SK-N-SH (cell line): ENCODE measurements at regions of chr21 and their contacts with region 1.

Region 1: GRCh38 chr21:34073032-34073869 is at the starts of genes MRPS6 and SLC5A3:
- DNase-seq: peak; percentile 94
- H3K4me3 ChIP-seq: peak within 1 kb of the TSS; percentile 75 to 89
- H3K27ac ChIP-seq: peak within 1 kb of the TSS; percentile 61 to 94; a peak in 3 of 4 replicates
- H3K4me1 ChIP-seq: peaks cover 18 to 27% of the 10 kb centered on the region in 2 experiments
- H3K27me3 ChIP-seq: no peaks in the 10 kb centered on the region
- CTCF ChIP-seq: no peak
- EP300 ChIP-seq: peak in 1 of 2 experiments; percentile 74; a peak in 2 of 4 replicates
- RAD21 ChIP-seq: peak; percentile 27
- polyA plus RNA-seq, gene MRPS6: 26.8 and 69.2 TPM in 2 replicates
- polyA plus RNA-seq, gene SLC5A3: 3.0 and 3.2 TPM in 2 replicates

Region 2: DNA sequence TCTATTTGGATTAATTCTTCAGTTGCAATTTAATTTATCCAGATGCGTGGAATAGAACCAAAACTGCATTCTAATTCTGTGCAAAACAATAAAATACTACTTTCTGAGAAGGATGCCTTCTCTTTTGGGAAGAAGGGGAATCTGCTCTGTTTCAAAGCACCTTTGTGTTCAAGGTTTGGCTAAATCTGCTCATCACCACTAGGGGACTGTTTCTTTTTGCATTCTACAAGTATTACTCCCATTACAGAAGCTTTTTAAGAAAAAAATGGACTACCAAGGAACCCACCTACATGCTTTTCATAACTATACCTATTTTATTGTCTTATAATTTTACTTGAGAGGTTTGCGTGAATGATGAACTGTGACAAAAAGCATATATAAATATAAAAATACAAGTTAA is 18.4 kb after region 1 on chr21:
- CTCF ChIA-PET with region 1: interaction called, 43 read pairs
- POLR2A ChIA-PET with region 1: no interaction called
- DNase-seq: no peak
- H3K4me3 ChIP-seq: no peak overlapping the region
- H3K27ac ChIP-seq: no peak overlapping the region
- H3K4me1 ChIP-seq: peaks cover 0 to 6% of the 10 kb centered on the region in 2 experiments; a peak in 3 of 4 replicates
- H3K27me3 ChIP-seq: no peaks in the 10 kb centered on the region
- CTCF ChIP-seq: peak; percentile 58
- EP300 ChIP-seq: no peak
- RAD21 ChIP-seq: peak; percentile 28; the same call in 1 of the 2 replicates

Region 3: DNA sequence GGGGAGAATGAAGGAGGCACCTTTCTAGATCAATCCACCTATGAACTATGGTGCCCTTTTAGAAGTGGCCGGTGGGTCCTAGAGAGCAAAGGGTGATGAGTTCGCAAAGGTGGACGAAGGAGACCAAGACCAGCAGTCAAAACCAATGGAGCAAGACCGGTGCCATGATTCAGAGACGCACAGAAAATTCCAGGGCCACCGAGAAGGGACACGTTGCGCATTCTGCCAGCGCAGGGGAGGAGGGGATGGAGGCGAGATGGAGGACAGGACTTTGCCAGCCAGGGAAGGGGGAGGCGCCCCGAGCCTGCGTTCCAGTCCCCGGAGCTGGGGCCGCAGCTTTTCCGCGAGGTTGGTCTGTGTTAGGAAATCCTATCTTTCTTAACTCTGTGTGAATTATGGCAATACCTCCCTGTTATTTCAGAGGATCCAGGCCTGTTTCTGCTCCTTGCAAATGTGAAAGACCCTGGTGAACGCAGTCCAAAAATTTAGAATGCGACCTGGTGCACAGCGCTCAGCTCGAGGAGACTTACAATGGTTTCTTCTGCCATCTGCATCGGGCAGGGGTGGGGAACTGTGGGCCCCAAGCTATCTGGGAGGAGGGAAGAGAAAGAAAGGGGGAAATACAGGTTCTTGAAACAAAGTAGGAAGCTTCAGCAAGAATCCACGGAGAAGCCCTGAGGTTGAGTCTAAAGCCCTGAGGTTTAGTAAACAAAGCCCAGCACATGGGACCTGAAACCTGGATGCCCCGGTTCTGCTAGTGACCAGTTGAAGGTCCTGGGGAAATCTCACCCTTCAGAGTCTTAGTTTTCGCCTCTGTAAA is 129.5 kb after region 1 on chr21:
- CTCF ChIA-PET with region 1: interaction called, 24 read pairs
- POLR2A ChIA-PET with region 1: interaction called, 12 read pairs
- DNase-seq: peak; percentile 55
- H3K4me3 ChIP-seq: no peak overlapping the region
- H3K27ac ChIP-seq: peak overlapping the region in 1 of 2 experiments; percentile 84; a peak in 1 of 4 replicates
- H3K4me1 ChIP-seq: peaks cover 7 to 43% of the 10 kb centered on the region in 2 experiments; a peak in 2 of 4 replicates
- H3K27me3 ChIP-seq: no peaks in the 10 kb centered on the region
- CTCF ChIP-seq: no peak
- EP300 ChIP-seq: no peak
- RAD21 ChIP-seq: no peak